Activated CD4-positive, alpha-beta T cell treated with anti-CD3 and anti-CD28 coated beads for 36 hours (primary cell): ENCODE measurements at regions of chr11 and their contacts with region 1.

Region 1: DNA sequence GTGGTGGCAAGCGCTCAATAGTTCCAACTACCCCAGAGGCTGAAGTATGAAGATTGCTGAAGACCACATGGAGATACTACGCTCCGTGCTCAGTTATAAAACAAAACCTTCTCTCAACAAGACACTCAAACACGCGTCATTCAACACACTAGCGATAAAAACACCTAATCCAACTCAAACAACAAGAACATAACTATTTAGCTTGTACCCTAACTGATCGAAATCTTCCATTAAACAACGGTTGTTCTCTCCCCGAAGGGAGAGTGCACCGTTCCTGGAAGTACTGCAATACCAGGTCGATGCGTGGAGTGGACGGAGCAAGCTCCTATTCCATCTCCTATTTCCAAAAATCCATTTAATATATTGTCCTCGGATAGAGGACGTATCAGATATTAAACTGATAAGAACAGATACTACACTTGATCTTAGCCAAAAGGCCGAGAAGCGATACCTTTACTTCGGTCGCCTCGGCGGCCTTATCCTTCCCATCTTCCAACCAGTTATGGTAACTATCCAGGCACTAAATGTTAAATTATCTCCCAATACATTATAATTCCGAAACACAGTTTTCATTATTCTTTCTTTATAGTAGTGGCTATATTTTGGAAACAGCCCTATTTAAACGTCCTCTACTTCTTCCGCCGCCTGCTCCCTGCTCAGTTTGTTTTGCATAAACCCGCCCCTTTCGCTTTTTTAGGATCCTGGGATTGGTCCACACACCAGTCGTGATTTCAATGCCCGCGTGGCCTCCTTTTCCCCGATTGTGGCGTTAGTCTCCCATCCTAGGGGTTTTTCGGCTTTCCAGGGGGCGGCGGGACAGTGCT is 2.2 kb upstream of the WDR74 start:
- DNase-seq: peak; percentile 86
- ATAC-seq: peak; percentile 67
- H3K4me3 Mint-ChIP-seq: no peak overlapping the region
- H3K27ac Mint-ChIP-seq: no peak overlapping the region
- H3K4me1 Mint-ChIP-seq: peaks cover 24% of the 10 kb centered on the region
- H3K27me3 Mint-ChIP-seq: no peaks in the 10 kb centered on the region

Region 2: GRCh38 chr11:62556108-62556871 is 285.3 kb before region 1 on chr11:
- CTCF ChIA-PET with region 1: no interaction called
- POLR2A ChIA-PET with region 1: interaction called, 9 read pairs
- intact Hi-C with region 1: loop called in 1 of 2 experiments (anchors 2 kb)
- DNase-seq: peak; percentile 92
- ATAC-seq: peak; percentile 65
- H3K4me3 Mint-ChIP-seq: peak overlapping the region; percentile 54
- H3K27ac Mint-ChIP-seq: peak overlapping the region; percentile 92
- H3K4me1 Mint-ChIP-seq: peaks cover 98% of the 10 kb centered on the region
- H3K27me3 Mint-ChIP-seq: no peaks in the 10 kb centered on the region

Region 3: DNA sequence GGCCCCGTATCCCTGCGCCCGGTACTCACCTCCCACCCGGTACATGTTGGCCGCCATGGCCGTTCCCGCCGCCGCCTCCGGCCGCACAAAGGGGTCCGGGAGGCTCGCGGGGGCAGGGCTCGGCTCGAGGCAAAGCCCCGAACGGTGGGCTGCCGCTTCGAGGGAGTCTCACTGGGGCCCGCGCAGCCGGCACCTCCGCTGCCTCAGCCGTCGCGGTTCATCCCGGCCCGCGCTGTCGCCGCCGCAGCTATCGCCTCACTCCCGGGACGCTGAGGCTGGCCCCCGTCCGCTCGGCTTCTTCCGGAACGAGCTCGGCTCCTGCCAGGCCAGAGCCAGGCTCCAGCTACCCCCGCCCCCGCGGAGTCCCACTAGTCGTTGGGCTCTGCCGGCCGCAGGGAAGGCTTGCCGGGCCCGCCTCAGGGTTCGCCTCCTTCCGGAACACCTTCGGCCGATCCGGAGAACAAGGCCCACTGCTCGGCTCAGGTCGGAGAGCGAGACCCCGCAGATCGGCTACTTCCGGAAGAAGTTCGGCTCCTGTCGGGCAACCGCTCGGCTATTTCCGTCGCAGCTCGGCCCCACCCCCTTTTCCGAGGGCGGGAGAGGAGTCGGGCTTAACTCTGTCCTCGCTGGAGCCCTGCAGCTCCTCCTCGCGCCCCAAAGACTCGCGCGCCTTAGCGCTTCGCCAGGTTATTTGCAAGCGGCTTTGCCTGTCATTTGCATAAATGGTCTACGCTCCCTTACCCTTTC is 240.0 kb before region 1 on chr11 and contains the start of gene MTA2:
- CTCF ChIA-PET with region 1: no interaction called
- POLR2A ChIA-PET with region 1: interaction called, 17 read pairs
- intact Hi-C with region 1: no loop called
- DNase-seq: peak; percentile 100
- ATAC-seq: peak; percentile 89
- H3K4me3 Mint-ChIP-seq: peak within 1 kb of the TSS; percentile 91
- H3K27ac Mint-ChIP-seq: peak within 1 kb of the TSS; percentile 96
- H3K4me1 Mint-ChIP-seq: peaks cover 51% of the 10 kb centered on the region
- H3K27me3 Mint-ChIP-seq: no peaks in the 10 kb centered on the region
- total RNA-seq, gene MTA2: 159 to 179 TPM

Region 4: GRCh38 chr11:62665075-62665598 is 176.4 kb before region 1 on chr11 and contains the starts of genes C11orf98 and CSKMT:
- CTCF ChIA-PET with region 1: no interaction called
- POLR2A ChIA-PET with region 1: interaction called, 25 read pairs
- intact Hi-C with region 1: loop called (anchors 2 to 5 kb)
- DNase-seq: peak; percentile 97
- ATAC-seq: peak; percentile 90
- H3K4me3 Mint-ChIP-seq: peak within 1 kb of the TSS; percentile 93
- H3K27ac Mint-ChIP-seq: peak within 1 kb of the TSS; percentile 89
- H3K4me1 Mint-ChIP-seq: peaks cover 38% of the 10 kb centered on the region
- H3K27me3 Mint-ChIP-seq: no peaks in the 10 kb centered on the region
- total RNA-seq, gene C11orf98: 108 to 135 TPM
- total RNA-seq, gene CSKMT: 12.6 to 31.3 TPM

Region 5: DNA sequence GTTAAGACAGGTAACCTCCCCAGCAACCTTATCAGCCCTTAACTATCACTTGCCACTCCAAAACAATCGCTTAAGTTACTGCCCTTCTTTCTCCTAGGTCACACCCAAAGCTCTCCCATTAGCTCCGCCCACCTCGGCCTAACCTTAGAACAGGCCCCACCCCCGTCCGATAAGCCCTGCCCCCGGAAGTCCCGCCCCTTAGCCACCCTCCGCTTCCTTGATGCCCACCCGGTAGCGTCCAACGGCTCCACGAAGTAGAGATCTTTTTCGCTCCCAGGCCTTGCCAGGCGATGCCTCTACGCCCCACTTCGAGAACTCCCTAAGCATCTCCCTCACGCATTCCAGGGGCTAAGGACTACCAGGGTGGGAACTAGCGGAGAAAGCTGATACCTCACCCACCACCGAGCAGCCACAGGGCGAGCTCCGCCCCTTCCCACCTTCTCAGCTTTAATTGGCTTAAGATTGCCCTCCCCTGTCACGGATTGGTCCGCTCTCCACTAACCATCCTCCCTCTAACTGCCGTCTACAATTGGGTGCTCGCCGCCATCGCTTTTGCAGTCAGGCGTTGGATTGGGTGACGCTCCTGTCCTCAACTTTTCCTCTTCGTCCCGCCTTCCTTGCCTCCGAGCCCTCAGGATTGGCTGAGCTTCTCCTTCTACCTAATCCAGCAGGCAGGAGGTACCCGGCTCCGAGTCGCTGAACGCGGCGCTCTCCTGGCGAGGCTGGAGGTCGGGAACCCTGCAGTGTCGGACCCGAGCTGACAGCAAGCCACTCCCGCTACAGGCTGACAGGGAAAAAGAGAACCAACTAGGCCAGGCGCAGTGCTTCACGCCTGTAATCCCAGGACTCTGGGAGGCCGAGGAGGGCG is 87.6 kb before region 1 on chr11 and contains the start of gene ZBTB3:
- CTCF ChIA-PET with region 1: interaction called, 3 read pairs
- POLR2A ChIA-PET with region 1: interaction called, 69 read pairs
- intact Hi-C with region 1: no loop called
- DNase-seq: peak; percentile 98
- ATAC-seq: peak; percentile 98
- H3K4me3 Mint-ChIP-seq: peak within 1 kb of the TSS; percentile 96
- H3K27ac Mint-ChIP-seq: peak within 1 kb of the TSS; percentile 97
- H3K4me1 Mint-ChIP-seq: peaks cover 26% of the 10 kb centered on the region
- H3K27me3 Mint-ChIP-seq: no peaks in the 10 kb centered on the region
- total RNA-seq, gene ZBTB3: 6.0 to 10.2 TPM

Region 6: GRCh38 chr11:62787005-62787759 is 54.4 kb before region 1 on chr11 and contains the start of gene TMEM179B:
- CTCF ChIA-PET with region 1: interaction called, 12 read pairs
- POLR2A ChIA-PET with region 1: interaction called, 52 read pairs
- intact Hi-C with region 1: loop called (anchors 1 kb)
- DNase-seq: peak; percentile 99
- ATAC-seq: peak; percentile 63
- H3K4me3 Mint-ChIP-seq: peak within 1 kb of the TSS; percentile 90
- H3K27ac Mint-ChIP-seq: peak within 1 kb of the TSS; percentile 95
- H3K4me1 Mint-ChIP-seq: peaks cover 42% of the 10 kb centered on the region
- H3K27me3 Mint-ChIP-seq: no peaks in the 10 kb centered on the region
- total RNA-seq, gene TMEM179B: 19.5 to 35.9 TPM

Region 7: GRCh38 chr11:62805076-62805892 is 36.3 kb before region 1 on chr11 and contains the start of gene NXF1:
- CTCF ChIA-PET with region 1: no interaction called
- POLR2A ChIA-PET with region 1: interaction called, 27 read pairs
- intact Hi-C with region 1: loop called (anchors 1 kb)
- DNase-seq: peak; percentile 97
- ATAC-seq: peak; percentile 79
- H3K4me3 Mint-ChIP-seq: peak within 1 kb of the TSS; percentile 99
- H3K27ac Mint-ChIP-seq: peak within 1 kb of the TSS; percentile 97
- H3K4me1 Mint-ChIP-seq: peaks cover 29% of the 10 kb centered on the region
- H3K27me3 Mint-ChIP-seq: no peaks in the 10 kb centered on the region
- total RNA-seq, gene NXF1: 89.5 to 97.6 TPM

Region 8: GRCh38 chr11:63017306-63017974 is 175.9 kb after region 1 on chr11:
- CTCF ChIA-PET with region 1: no interaction called
- POLR2A ChIA-PET with region 1: no interaction called
- intact Hi-C with region 1: no loop called
- DNase-seq: no peak
- ATAC-seq: no peak
- H3K4me3 Mint-ChIP-seq: no peak overlapping the region
- H3K27ac Mint-ChIP-seq: no peak overlapping the region
- H3K4me1 Mint-ChIP-seq: no peaks in the 10 kb centered on the region
- H3K27me3 Mint-ChIP-seq: peaks cover 10% of the 10 kb centered on the region